Panc1 (cell line): ENCODE measurements at regions of chr16 and their contacts with region 1.

Region 1: GRCh38 chr16:75647492-75648264 is at the starts of genes KARS1 and TERF2IP:
- DNase-seq: peak; percentile 78
- ATAC-seq: peak; percentile 97
- H3K4me3 ChIP-seq: peak within 1 kb of the TSS; percentile 96 to 98
- H3K27ac ChIP-seq: peak within 1 kb of the TSS; percentile 97
- H3K4me1 ChIP-seq: peaks cover 9% of the 10 kb centered on the region
- H3K27me3 ChIP-seq: no peaks in the 10 kb centered on the region
- CTCF ChIP-seq: no peak
- total RNA-seq, gene KARS1: 119 TPM
- total RNA-seq, gene TERF2IP: 23.3 TPM

Region 2: DNA sequence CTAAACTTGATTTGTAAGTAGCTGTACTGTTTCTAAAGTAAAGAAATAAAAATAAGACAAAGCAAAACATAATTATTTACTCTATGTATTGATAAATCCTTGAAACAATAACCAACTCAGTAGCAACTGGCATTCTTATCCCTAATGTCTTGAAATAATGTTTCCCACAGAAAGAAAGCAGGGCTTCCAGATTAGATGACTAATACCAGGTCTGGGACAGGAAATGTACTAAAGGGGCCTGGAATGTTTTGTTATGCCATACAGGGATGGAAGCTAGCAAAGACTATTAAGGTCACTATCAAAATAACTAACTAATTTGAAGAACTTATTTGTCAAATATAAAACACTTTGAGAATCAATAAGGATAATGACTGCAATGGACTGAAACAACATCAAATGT is 296.5 kb before region 1 on chr16:
- CTCF ChIA-PET with region 1: no interaction called
- POLR2A ChIA-PET with region 1: no interaction called
- in situ Hi-C with region 1: no loop called
- intact Hi-C with region 1: no loop called
- DNase-seq: peak; percentile 36
- ATAC-seq: peak; percentile 65; the same call in 1 of the 2 replicates
- H3K4me3 ChIP-seq: no peak overlapping the region
- H3K27ac ChIP-seq: no peak overlapping the region
- H3K4me1 ChIP-seq: no peaks in the 10 kb centered on the region
- H3K27me3 ChIP-seq: no peaks in the 10 kb centered on the region
- CTCF ChIP-seq: no peak

Region 3: GRCh38 chr16:75576384-75576811 is 71.3 kb before region 1 on chr16:
- CTCF ChIA-PET with region 1: no interaction called
- POLR2A ChIA-PET with region 1: interaction called, 13 read pairs
- in situ Hi-C with region 1: no loop called
- intact Hi-C with region 1: no loop called
- DNase-seq: no peak
- ATAC-seq: no peak
- H3K4me3 ChIP-seq: no peak overlapping the region
- H3K27ac ChIP-seq: no peak overlapping the region
- H3K4me1 ChIP-seq: no peaks in the 10 kb centered on the region
- H3K27me3 ChIP-seq: no peaks in the 10 kb centered on the region
- CTCF ChIP-seq: no peak

Region 4: DNA sequence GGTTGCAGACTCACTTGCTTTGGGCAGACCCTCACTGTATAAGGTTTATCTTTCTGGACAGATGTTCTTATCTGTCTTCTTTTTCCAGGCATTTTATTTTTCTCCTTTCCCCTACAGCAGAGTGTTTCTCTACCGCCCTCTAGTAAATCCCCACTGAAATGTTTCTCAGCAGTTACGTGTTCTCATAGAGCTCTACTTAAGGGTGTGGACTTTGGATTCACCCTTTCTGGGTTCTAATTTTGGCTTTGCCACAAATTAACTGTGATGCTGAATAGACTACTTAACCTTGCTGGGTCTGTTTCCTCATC is 26.6 kb before region 1 on chr16:
- CTCF ChIA-PET with region 1: no interaction called
- POLR2A ChIA-PET with region 1: no interaction called
- in situ Hi-C with region 1: no loop called
- intact Hi-C with region 1: no loop called
- DNase-seq: no peak
- ATAC-seq: no peak
- H3K4me3 ChIP-seq: no peak overlapping the region
- H3K27ac ChIP-seq: no peak overlapping the region
- H3K4me1 ChIP-seq: peaks cover 7% of the 10 kb centered on the region
- H3K27me3 ChIP-seq: no peaks in the 10 kb centered on the region
- CTCF ChIP-seq: peak; percentile 54

Region 5: DNA sequence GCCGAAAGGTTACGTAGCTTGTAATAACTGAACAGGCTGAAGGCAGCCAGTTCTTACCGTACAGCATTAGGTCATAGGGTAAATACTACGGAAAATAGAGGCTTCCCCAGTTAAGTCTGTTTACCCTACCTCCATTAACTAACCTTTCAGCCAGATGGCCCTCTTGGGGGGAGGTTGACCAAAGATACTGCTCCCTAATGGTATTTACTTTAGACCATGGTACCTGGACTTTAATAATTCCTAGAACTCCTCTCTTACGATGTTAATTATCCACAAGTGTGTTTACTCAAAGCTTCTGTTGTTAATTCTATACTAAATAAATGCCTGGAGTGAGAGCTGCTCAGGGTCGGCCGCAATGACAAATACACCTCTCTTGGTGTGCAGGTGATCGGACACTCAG is 14.8 kb before region 1 on chr16:
- CTCF ChIA-PET with region 1: no interaction called
- POLR2A ChIA-PET with region 1: interaction called, 20 read pairs
- in situ Hi-C with region 1: no loop called
- intact Hi-C with region 1: no loop called
- DNase-seq: no peak
- ATAC-seq: no peak
- H3K4me3 ChIP-seq: no peak overlapping the region
- H3K27ac ChIP-seq: no peak overlapping the region
- H3K4me1 ChIP-seq: no peaks in the 10 kb centered on the region
- H3K27me3 ChIP-seq: no peaks in the 10 kb centered on the region
- CTCF ChIP-seq: no peak

Region 6: DNA sequence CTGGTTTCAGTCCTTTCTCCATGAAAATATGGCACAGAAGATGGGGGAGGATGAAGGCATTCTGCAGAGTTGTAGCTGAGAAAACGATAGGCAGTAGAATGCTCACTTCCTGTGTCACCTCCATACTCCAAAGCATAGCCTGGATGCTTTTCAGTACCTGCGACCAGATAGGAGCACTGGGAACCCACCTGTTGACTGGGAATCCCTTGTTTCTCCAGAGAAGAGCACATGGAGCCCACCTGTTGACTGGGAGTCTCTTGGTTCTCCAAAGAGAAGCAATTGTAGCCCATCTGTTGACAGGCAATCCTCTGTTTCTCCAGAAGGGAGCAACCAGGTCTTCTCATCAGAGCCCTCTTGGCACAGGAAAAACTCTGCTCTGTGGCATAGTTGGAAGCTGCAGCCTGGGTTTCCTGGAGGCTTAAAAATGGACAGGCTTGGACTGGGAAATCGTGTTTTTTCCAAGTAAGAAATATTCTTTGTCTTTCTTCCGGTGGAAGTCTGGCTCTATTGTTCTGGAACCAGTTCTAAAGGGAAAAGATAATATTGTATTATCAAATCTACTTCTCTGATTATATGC is 13.1 kb after region 1 on chr16:
- CTCF ChIA-PET with region 1: no interaction called
- POLR2A ChIA-PET with region 1: no interaction called
- in situ Hi-C with region 1: no loop called
- intact Hi-C with region 1: no loop called
- DNase-seq: no peak
- ATAC-seq: no peak
- H3K4me3 ChIP-seq: no peak overlapping the region
- H3K27ac ChIP-seq: no peak overlapping the region
- H3K4me1 ChIP-seq: no peaks in the 10 kb centered on the region
- H3K27me3 ChIP-seq: no peaks in the 10 kb centered on the region
- CTCF ChIP-seq: no peak

Region 7: DNA sequence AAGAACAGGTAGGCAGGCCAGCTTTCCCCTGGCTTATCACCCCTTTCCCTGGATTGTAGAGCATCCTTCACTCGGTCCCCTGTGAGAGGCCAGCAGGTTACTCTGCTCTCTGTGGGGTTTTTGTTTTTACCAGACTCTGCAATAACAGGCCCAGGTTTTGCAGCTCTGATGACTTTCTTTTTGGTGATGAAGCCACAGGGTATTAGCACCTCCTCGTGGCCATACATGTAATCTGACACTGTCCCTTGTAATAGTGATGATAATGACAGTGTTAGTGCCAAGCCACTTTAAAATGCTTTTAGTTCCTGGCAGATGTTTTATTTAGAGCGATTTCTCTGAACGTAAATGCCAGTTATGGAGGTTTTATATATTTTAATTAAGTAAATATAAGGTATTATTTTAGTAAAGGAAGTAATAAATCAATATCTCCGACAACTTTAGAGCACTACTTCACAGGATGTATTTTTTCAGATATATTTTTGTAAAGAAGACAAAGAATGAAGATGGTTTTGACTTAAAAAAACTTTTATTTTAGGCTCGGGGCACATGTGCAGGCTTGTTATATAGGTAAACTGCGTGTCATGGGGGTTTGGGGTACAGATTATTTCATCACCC is 116.6 kb after region 1 on chr16:
- CTCF ChIA-PET with region 1: interaction called, 3 read pairs
- POLR2A ChIA-PET with region 1: interaction called, 4 read pairs
- in situ Hi-C with region 1: no loop called
- intact Hi-C with region 1: loop called (anchors 10 kb)
- DNase-seq: peak; percentile 39
- ATAC-seq: peak; percentile 93
- H3K4me3 ChIP-seq: no peak overlapping the region
- H3K27ac ChIP-seq: no peak overlapping the region
- H3K4me1 ChIP-seq: no peaks in the 10 kb centered on the region
- H3K27me3 ChIP-seq: peaks cover 6% of the 10 kb centered on the region; the same call in 1 of the 2 replicates
- CTCF ChIP-seq: peak; percentile 81

Region 8: DNA sequence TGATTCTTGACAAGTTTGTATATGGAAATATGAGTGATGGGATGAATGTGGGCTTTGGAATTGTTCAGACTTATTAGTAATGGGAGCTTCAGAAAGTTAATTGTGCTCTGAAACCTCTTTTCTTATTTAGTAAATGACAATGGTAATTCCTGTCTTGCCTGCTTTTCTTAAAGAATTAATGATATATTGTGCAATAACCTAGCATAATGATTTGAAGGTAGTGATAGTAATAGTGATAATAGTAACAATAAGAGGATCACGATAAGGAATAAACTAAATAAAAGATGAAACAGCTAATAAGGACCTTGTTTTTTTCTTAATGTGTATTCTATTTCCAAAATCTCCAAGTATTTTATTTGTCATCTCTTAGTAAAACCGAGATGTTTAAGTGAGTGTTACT is 323.7 kb after region 1 on chr16:
- CTCF ChIA-PET with region 1: no interaction called
- POLR2A ChIA-PET with region 1: no interaction called
- in situ Hi-C with region 1: no loop called
- intact Hi-C with region 1: no loop called
- DNase-seq: no peak
- ATAC-seq: no peak
- H3K4me3 ChIP-seq: no peak overlapping the region
- H3K27ac ChIP-seq: no peak overlapping the region
- H3K4me1 ChIP-seq: no peaks in the 10 kb centered on the region
- H3K27me3 ChIP-seq: no peaks in the 10 kb centered on the region
- CTCF ChIP-seq: no peak